ENCODE measurements at regions of chr15 and their contacts with region 1.

Region 1: DNA sequence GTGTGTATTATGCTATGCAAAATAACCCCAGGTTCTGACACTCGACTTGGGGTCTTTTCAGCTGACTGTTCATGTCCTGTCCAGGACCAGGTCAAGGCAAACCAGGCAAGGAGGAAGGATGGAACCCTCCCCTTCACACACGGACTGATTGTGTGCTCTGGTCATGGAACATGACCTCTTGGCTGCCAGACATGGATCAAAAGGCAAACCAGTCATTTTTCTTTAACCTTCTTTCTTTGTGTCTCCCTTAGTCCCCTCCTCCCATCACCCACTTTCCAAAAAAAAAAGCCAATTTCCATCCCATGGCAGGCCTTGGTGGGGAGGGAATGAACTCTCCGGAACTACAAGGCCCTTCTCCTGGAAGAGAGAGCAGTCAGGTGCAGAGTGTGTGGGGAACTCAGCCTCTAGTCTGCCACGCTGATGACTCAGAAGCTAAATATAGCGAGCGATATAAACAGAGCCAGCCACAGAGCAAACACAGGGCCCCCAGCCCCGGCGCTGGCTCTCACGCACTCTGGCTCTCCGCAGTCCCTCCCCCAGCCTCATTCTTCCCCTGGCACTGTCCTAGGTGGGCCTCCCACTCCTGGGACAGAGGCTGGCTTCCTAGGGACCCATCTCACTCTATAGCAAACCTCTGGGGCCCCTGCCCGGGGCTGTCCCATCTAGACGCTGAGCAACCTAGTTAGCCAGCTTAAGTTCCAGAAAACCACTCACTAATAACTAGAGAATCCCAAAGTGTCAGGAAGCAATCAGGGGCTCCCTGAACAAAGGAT is 10.0 kb downstream of the BMF start:
- DNase-seq: peak; percentile 75
- ATAC-seq: peak; percentile 97
- H3K4me3 Mint-ChIP-seq: peak overlapping the region; percentile 55
- H3K27ac Mint-ChIP-seq: peak overlapping the region; percentile 89
- H3K4me1 Mint-ChIP-seq: peaks cover 44% of the 10 kb centered on the region
- H3K27me3 Mint-ChIP-seq: no peaks in the 10 kb centered on the region

Region 2: GRCh38 chr15:40047413-40048210 is 51.1 kb before region 1 on chr15:
- POLR2A ChIA-PET with region 1: interaction called, 13 read pairs
- DNase-seq: peak; percentile 55
- ATAC-seq: peak; percentile 76
- H3K4me3 Mint-ChIP-seq: peak overlapping the region; percentile 65
- H3K27ac Mint-ChIP-seq: peak overlapping the region; percentile 92
- H3K4me1 Mint-ChIP-seq: peaks cover 46% of the 10 kb centered on the region
- H3K27me3 Mint-ChIP-seq: no peaks in the 10 kb centered on the region

Region 3: GRCh38 chr15:40087991-40088928 is 10.4 kb before region 1 on chr15:
- POLR2A ChIA-PET with region 1: interaction called, 13 read pairs
- DNase-seq: no peak
- ATAC-seq: no peak
- H3K4me3 Mint-ChIP-seq: no peak overlapping the region
- H3K27ac Mint-ChIP-seq: no peak overlapping the region
- H3K4me1 Mint-ChIP-seq: peaks cover 7% of the 10 kb centered on the region
- H3K27me3 Mint-ChIP-seq: peaks cover 8% of the 10 kb centered on the region

Region 4: GRCh38 chr15:40108855-40109735 is 10.4 kb after region 1 on chr15 and contains the start of gene BMF:
- POLR2A ChIA-PET with region 1: interaction called, 13 read pairs
- DNase-seq: peak; percentile 97
- ATAC-seq: peak; percentile 79
- H3K4me3 Mint-ChIP-seq: peak within 1 kb of the TSS; percentile 91
- H3K27ac Mint-ChIP-seq: peak within 1 kb of the TSS; percentile 81
- H3K4me1 Mint-ChIP-seq: peaks cover 45% of the 10 kb centered on the region
- H3K27me3 Mint-ChIP-seq: peaks cover 24% of the 10 kb centered on the region
- total RNA-seq, gene BMF: 20.6 to 24.6 TPM

Region 5: GRCh38 chr15:40115670-40116093 is 17.0 kb after region 1 on chr15:
- POLR2A ChIA-PET with region 1: interaction called, 13 read pairs
- DNase-seq: peak; percentile 74
- ATAC-seq: peak; percentile 94
- H3K4me3 Mint-ChIP-seq: peak overlapping the region; percentile 77
- H3K27ac Mint-ChIP-seq: peak overlapping the region; percentile 96
- H3K4me1 Mint-ChIP-seq: peaks cover 28% of the 10 kb centered on the region
- H3K27me3 Mint-ChIP-seq: peaks cover 17% of the 10 kb centered on the region

Region 6: DNA sequence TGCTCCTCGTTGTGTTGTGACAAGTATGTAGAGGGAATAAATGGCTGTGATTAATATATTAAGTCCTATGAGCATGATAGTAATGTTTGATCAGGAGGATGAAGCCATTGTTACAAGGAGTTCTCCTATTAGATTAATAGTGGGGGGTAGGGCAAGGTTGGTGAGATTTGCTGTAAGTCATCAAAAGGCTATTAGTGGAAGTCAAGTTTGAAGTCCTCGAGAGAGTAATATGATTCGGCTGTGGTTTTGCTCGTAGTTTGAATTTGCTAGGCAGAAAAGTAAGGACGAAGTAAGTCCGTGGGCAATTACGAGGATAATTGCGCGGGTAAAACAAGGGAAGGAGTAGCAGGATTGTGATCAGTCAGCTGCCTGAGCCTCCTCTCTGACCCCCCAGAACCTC is 36.2 kb after region 1 on chr15:
- POLR2A ChIA-PET with region 1: no interaction called
- DNase-seq: no peak
- ATAC-seq: no peak
- H3K4me3 Mint-ChIP-seq: no peak overlapping the region
- H3K27ac Mint-ChIP-seq: no peak overlapping the region
- H3K4me1 Mint-ChIP-seq: no peaks in the 10 kb centered on the region
- H3K27me3 Mint-ChIP-seq: no peaks in the 10 kb centered on the region

Measured in activated naive CD8-positive, alpha-beta T cell treated with anti-CD3 and anti-CD28 coated beads, Interleukin-2, amount 10 ng/mL, durations not matched to agents 7 days and 5 days (primary cell).